ENCODE measurements at regions of chr10 and their contacts with region 1.

Region 1: GRCh38 chr10:86971232-86971991 is 3.1 kb downstream of the ADIRF start:
- DNase-seq: peak; percentile 73
- H3K4me3 ChIP-seq: peak overlapping the region in 2 of 3 experiments; percentile 47 to 48
- H3K27ac ChIP-seq: peak overlapping the region; percentile 77
- H3K4me1 ChIP-seq: peaks cover 48% of the 10 kb centered on the region
- H3K27me3 ChIP-seq: no peaks in the 10 kb centered on the region
- CTCF ChIP-seq: no peak
- POLR2A ChIP-seq: no peak

Region 2: DNA sequence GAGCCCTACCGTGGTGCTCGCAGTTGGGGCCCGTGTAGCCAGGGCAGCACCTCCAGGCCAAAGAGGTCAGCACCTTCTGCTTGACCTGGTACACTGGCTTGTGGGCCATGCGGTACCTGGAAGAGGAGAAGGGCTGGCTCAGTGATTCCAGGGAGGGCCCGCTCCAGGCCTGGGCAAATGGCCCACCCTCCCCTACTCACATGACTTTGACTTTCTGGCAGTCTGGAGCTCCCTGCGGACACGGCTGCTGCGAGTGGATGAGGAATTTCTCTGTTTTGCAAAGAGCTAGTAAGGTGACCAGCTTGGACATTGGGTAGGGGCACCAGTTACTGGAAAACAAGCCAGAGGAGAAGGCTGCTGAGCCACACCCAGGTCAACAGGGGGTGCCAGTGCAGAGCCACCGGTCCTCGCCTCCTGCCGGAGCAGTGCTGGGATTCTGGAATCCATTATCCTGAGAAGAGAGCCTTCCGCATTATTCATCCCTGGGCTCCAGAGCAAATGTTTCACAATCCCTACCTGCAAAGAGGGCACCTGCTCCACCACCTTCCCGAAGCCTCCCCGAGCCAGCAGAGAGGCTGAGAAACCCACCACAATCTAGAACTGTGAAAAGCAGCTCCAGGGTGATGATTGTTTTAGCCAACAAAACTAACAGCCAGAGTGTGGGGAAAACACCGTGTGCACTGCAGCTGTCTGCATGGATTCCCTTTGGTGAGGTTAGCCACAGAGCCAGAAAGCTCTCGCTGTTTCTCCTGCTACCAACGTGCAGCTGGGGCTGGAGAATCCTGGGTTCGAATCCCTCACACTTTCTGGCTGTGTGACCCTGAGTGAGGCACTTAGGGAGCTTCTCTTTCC is 25.8 kb before region 1 on chr10:
- CTCF ChIA-PET with region 1: interaction called, 189 read pairs
- POLR2A ChIA-PET with region 1: no interaction called
- dilution Hi-C with region 1: no loop called
- intact Hi-C with region 1: no loop called
- DNase-seq: no peak
- H3K4me3 ChIP-seq: no peak overlapping the region
- H3K27ac ChIP-seq: no peak overlapping the region
- H3K4me1 ChIP-seq: no peaks in the 10 kb centered on the region
- H3K27me3 ChIP-seq: no peaks in the 10 kb centered on the region
- CTCF ChIP-seq: peak; percentile 7 to 16
- POLR2A ChIP-seq: no peak

Region 3: GRCh38 chr10:87085537-87085936 is 114.1 kb after region 1 on chr10:
- CTCF ChIA-PET with region 1: interaction called, 4 read pairs
- POLR2A ChIA-PET with region 1: no interaction called
- dilution Hi-C with region 1: no loop called
- intact Hi-C with region 1: loop called (anchors 2 kb)
- DNase-seq: no peak
- H3K4me3 ChIP-seq: no peak overlapping the region
- H3K27ac ChIP-seq: no peak overlapping the region
- H3K4me1 ChIP-seq: peaks cover 30% of the 10 kb centered on the region
- H3K27me3 ChIP-seq: no peaks in the 10 kb centered on the region
- CTCF ChIP-seq: no peak
- POLR2A ChIP-seq: no peak

Region 4: DNA sequence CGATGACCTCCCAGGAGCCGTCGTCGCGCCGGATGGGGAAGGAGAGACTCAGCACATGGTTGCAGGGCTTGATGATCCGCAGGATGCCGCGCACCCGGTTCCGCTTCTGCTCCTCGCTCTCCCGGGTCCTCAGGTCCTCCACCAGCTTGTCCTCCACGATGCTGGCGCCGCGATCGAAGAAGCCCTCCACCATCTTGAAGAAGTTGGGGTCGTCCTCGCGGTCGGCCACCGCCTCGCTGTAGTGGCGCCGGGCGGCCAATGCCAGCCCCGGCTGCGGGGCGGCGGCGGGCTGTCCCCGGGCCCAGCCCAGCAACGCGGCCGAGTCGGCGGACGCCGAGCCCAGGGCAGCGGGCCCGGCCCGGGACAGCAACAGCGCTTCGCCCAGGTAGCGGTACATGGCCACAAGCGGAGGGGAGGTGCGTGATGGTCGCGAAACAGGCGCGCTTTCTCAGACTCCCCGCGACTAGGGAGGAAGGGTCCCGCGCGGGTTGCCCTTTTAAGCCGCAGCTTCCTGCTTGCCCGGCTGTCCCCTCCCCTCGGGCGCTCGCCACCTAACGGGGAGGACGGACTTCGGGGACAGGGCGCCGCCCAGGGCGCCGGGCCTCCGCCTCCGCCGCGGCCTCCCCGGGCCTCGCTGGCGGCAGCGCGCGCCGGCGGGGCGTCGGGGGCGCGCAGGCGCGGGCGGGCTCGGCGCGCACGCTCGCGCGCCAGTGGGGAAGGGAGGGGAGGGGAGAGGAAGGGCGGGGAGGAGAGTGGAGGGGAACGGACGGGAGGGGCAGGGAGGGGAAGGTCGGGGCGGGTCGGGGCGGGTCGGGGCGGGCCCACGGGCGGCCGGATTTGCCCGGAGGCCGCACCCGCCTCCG is 123.2 kb after region 1 on chr10 and contains the starts of genes GLUD1 and SHLD2:
- CTCF ChIA-PET with region 1: interaction called, 5 read pairs
- POLR2A ChIA-PET with region 1: no interaction called
- dilution Hi-C with region 1: no loop called
- intact Hi-C with region 1: loop called (anchors 2 kb)
- DNase-seq: peak; percentile 82
- H3K4me3 ChIP-seq: peak within 1 kb of the TSS; percentile 69 to 95 (median 94)
- H3K27ac ChIP-seq: peak within 1 kb of the TSS; percentile 72
- H3K4me1 ChIP-seq: peaks cover 35% of the 10 kb centered on the region
- H3K27me3 ChIP-seq: no peaks in the 10 kb centered on the region
- CTCF ChIP-seq: no peak
- POLR2A ChIP-seq: peak; percentile 79
- total RNA-seq, gene GLUD1: 86.6 and 94.7 TPM in 2 replicates
- total RNA-seq, gene SHLD2: 19.2 and 22.4 TPM in 2 replicates

Region 5: DNA sequence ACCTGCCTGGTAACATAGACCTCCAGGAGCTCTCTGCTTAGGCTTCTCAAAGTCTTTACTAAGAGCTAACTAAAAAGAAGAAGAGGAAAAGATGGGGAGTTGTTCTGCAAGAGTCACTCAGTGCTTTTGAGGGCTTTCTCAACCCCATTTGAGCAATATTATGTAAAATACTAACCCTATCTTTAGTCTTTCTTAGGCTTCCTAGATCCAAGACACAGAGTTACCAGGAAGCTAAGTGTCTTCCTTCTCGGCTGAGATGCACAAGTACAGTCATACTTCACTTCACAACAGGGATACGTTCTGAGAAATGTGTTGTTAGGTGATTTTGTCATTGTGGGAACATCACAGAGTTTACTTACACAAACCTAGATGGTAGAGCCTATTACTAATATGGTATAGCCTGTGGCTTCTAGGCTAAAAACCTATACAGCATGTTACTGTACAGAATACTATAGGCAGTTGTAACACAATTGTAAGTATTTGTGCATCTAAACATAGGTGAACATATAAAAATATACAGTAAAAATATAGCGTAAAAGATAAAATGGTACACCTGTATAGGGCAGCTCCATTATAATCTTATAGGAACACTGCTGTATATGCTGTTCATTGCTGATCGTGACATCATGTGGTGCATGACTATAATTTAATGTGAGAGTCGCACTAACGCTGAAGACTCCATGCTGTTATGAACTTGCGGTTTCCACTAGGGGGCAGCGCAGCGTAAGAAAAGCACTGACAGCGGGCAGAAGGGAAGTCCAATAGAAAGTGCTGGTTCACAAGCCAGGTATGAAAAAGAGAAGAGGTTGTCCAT is 1863.9 kb after region 1 on chr10:
- CTCF ChIA-PET with region 1: no interaction called
- POLR2A ChIA-PET with region 1: no interaction called
- dilution Hi-C with region 1: no loop called
- intact Hi-C with region 1: no loop called
- DNase-seq: peak; percentile 85
- H3K4me3 ChIP-seq: no peak overlapping the region
- H3K27ac ChIP-seq: no peak overlapping the region
- H3K4me1 ChIP-seq: no peaks in the 10 kb centered on the region
- H3K27me3 ChIP-seq: peaks cover 0 to 2% of the 10 kb centered on the region in 2 experiments
- CTCF ChIP-seq: peak; percentile 83 to 88
- POLR2A ChIP-seq: no peak